PC-3 (cell line): ENCODE measurements at regions of chr17 and their contacts with region 1.

Region 1: DNA sequence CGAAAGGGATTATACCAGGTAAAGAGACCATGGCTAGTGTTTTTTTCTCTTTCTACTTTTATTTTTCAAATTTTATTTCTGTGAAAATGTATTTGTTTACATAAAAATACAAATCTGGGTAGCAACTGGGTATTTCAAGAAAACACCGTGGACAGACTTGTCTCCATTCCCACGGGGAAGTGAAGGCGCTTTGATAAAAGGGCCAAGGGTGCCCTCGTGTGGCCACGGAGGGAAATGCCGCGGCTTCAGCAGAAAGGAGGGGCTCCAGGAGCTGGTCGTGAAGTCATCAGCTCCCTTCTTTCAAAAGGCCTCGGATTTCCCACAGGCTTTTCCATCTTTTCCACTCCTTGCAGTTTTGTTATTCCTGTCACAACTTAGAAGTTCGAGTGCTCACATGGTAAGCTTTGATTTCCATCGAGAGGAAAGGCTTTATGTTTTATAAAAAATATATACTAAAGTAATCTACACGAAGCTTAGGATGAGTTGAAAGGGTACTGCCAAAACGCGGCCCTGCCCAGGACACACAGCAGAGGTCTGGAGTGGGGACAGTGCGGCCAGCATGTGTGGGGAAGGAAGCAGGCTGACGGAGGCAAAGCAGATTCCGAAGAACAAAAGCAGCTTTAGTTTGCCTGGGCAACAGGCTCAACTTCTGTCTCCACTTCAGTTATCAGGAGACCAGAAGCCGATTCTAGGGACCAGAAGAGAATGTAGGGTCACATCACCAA is 15.3 kb upstream of the MNT start:
- DNase-seq: peak; percentile 90
- ATAC-seq: peak; percentile 74
- H3K4me3 ChIP-seq: no peak overlapping the region
- H3K27ac ChIP-seq: no peak overlapping the region
- H3K4me1 ChIP-seq: no peaks in the 10 kb centered on the region
- H3K27me3 ChIP-seq: no peaks in the 10 kb centered on the region
- CTCF ChIP-seq: peak; percentile 85

Region 2: DNA sequence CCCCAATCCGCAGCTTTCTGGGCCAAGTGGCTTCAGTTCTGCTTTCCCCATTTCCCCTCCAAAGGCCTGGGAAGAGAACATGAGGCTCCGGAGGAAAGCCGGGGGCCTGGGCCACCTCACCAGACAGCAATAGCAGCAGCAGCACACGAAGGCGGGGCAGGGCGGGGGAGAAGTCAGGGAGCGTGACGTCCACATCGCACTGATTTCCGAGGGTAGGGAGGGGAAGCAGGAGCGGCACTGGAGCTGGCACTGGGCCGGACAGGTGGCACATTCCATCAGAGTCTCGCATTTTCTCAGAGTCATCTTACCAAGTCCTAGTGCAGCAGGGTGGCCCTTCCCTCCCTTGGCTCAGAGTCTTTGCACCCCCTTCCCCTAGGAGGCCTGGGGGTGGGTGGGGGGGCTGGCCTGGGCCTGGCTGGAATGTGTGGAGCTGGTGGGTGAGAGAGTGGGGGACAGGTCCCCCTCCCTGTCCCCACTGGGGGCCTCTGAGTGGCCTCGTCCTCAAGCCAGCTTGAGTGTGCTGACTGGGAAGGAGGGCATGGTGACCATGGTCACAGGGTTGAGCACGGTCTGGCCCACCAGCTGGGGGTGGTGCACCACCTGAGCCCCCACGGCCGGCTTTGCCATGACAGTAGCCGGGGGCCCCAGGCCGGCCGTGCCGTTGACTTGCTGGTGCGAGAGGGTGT is 29.6 kb before region 1 on chr17:
- CTCF ChIA-PET with region 1: interaction called, 57 read pairs
- POLR2A ChIA-PET with region 1: no interaction called
- intact Hi-C with region 1: loop called (anchors 1 kb)
- DNase-seq: no peak
- ATAC-seq: no peak
- H3K4me3 ChIP-seq: no peak overlapping the region
- H3K27ac ChIP-seq: no peak overlapping the region
- H3K4me1 ChIP-seq: peaks cover 2% of the 10 kb centered on the region
- H3K27me3 ChIP-seq: no peaks in the 10 kb centered on the region
- CTCF ChIP-seq: no peak

Region 3: DNA sequence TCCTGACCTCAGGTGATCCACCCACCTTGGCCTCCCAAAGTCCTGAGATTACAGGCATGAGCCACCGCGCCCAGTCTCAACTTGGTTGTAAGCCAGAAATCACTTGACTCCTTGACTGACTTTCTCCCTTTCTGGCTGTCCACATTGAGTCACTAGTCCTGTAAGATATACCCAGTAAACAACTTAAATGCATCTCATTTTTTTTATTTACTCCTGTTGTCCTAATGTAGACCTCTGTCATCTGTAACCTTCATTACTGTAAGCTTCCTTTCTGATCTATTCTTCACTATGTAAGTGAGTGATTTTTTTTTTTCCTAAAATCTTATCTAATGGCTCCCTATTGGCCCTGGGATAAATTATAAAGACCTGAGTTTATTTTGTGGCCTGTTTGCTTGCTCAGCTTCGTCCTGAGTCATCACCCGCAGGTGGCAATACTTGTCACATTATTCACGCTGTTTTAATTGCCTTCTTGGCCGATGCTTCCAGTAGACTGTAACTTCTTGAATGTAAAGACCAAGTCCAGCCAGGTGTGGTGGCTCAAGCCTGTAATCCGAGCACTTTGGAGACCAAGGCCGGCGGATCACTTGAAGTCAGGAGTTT is 218.3 kb after region 1 on chr17:
- CTCF ChIA-PET with region 1: no interaction called
- POLR2A ChIA-PET with region 1: interaction called, 11 read pairs
- intact Hi-C with region 1: no loop called
- DNase-seq: peak; percentile 88
- ATAC-seq: peak; percentile 93
- H3K4me3 ChIP-seq: no peak overlapping the region
- H3K27ac ChIP-seq: peak overlapping the region; percentile 63
- H3K4me1 ChIP-seq: peaks cover 18% of the 10 kb centered on the region
- H3K27me3 ChIP-seq: no peaks in the 10 kb centered on the region
- CTCF ChIP-seq: no peak